ENCODE measurements at regions of chr4 and their contacts with region 1.

Region 1: GRCh38 chr4:48085821-48086607 is 48.0 kb downstream of the TXK start:
- DNase-seq: no peak
- ATAC-seq: no peak
- H3K4me3 ChIP-seq: no peak overlapping the region
- H3K27ac ChIP-seq: no peak overlapping the region
- H3K4me1 ChIP-seq: no peaks in the 10 kb centered on the region; the same call in 1 of the 2 replicates
- H3K27me3 ChIP-seq: no peaks in the 10 kb centered on the region
- CTCF ChIP-seq: no peak

Region 2: GRCh38 chr4:47926639-47927258 is 159.3 kb before region 1 on chr4:
- CTCF ChIA-PET with region 1: no interaction called
- POLR2A ChIA-PET with region 1: no interaction called
- in situ Hi-C with region 1: no loop called
- intact Hi-C with region 1: loop called (anchors 5 kb)
- DNase-seq: peak; percentile 27
- ATAC-seq: peak; percentile 95
- H3K4me3 ChIP-seq: peak overlapping the region in 1 of 2 experiments; percentile 2; a peak in 1 of 4 replicates
- H3K27ac ChIP-seq: no peak overlapping the region
- H3K4me1 ChIP-seq: no peaks in the 10 kb centered on the region
- H3K27me3 ChIP-seq: peaks cover 2% of the 10 kb centered on the region; the same call in 1 of the 2 replicates
- CTCF ChIP-seq: peak; percentile 80

Region 3: DNA sequence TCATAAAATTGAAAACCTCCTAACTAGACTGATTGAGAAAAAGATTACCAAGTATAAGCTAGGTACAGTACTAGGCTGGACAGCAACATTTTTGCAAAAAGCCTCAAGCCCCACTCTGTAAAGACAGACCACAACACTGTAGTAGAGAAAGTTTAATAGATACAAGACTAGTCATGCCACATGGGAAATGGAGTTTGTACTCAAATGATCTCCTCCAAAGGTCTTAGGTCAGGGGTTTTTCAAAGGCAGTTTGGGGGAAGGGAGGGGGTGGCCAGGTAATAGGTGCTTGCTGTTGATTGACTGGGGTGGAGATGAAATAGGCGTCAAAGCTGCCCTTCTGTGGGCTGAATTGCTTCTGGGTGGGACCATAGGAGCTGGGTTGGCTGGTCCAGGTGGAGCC is 83.7 kb before region 1 on chr4:
- CTCF ChIA-PET with region 1: no interaction called
- POLR2A ChIA-PET with region 1: no interaction called
- in situ Hi-C with region 1: no loop called
- intact Hi-C with region 1: loop called (anchors 5 kb)
- DNase-seq: no peak
- ATAC-seq: no peak
- H3K4me3 ChIP-seq: no peak overlapping the region
- H3K27ac ChIP-seq: no peak overlapping the region
- H3K4me1 ChIP-seq: no peaks in the 10 kb centered on the region
- H3K27me3 ChIP-seq: no peaks in the 10 kb centered on the region
- CTCF ChIP-seq: no peak